IMR-90 (cell line): ENCODE measurements at regions of chr1 and their contacts with region 1.

Region 1: GRCh38 chr1:15799004-15799936 is 8.2 kb downstream of the UQCRHL start:
- DNase-seq: peak; percentile 96
- ATAC-seq: peak; percentile 86
- H3K4me3 ChIP-seq: no peak overlapping the region
- H3K27ac ChIP-seq: peak overlapping the region; percentile 81
- H3K4me1 ChIP-seq: peaks cover 43% of the 10 kb centered on the region
- H3K27me3 ChIP-seq: no peaks in the 10 kb centered on the region
- CTCF ChIP-seq: no peak
- POLR2A ChIP-seq: no peak
- RAD21 ChIP-seq: no peak

Region 2: DNA sequence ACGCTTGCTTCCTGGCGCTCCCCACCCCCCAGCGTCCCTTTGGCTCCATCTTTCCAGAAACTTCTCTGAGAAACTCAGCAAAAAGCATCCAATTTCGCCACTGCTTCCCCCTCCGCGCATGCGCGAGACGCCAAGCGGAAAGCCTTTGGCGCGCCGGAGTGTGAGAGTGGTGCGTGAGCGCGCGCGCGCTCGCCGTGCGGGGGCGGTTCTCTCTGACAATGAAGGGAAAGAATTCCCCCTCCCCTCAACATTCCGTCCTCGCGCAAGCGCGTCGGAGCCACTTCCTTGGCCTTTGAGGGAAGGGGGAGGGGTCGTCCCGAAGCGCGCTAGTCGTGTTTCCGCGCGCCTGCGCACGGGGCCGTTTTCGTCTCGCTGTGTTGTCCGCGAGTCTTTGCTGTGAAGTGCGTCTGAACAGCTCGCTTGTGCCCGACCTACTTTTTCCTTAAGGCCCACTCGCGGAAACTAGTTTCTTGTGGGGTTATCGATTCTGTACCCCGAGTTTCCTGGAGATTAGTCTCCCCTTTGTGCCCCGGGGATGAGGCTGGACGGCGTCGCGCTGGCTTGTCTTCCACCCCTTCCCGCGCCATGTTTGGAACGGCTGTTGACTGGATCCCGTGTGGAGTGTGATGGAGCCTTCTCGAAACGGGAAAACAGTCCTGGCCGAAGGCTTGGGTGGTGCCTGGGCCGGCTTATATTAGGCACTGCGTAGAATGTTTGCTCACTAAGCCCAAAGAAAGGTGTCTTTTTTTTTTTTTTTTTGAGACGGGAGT is 36.7 kb after region 1 on chr1:
- CTCF ChIA-PET with region 1: no interaction called
- POLR2A ChIA-PET with region 1: no interaction called
- dilution Hi-C with region 1: no loop called
- in situ Hi-C with region 1: no loop called
- intact Hi-C with region 1: loop called (anchors 2 kb)
- DNase-seq: peak; percentile 99
- ATAC-seq: peak; percentile 82
- H3K4me3 ChIP-seq: peak overlapping the region; percentile 68
- H3K27ac ChIP-seq: peak overlapping the region; percentile 85
- H3K4me1 ChIP-seq: peaks cover 2% of the 10 kb centered on the region; the same call in 1 of the 2 replicates
- H3K27me3 ChIP-seq: no peaks in the 10 kb centered on the region
- CTCF ChIP-seq: no peak
- POLR2A ChIP-seq: peak; percentile 85
- RAD21 ChIP-seq: no peak

Region 3: GRCh38 chr1:15866721-15867201 is 67.5 kb after region 1 on chr1:
- CTCF ChIA-PET with region 1: no interaction called
- POLR2A ChIA-PET with region 1: no interaction called
- dilution Hi-C with region 1: no loop called
- in situ Hi-C with region 1: no loop called
- intact Hi-C with region 1: no loop called
- DNase-seq: no peak
- ATAC-seq: no peak
- H3K4me3 ChIP-seq: no peak overlapping the region
- H3K27ac ChIP-seq: no peak overlapping the region
- H3K4me1 ChIP-seq: peaks cover 7% of the 10 kb centered on the region
- H3K27me3 ChIP-seq: no peaks in the 10 kb centered on the region
- CTCF ChIP-seq: no peak
- POLR2A ChIP-seq: no peak
- RAD21 ChIP-seq: no peak

Region 4: DNA sequence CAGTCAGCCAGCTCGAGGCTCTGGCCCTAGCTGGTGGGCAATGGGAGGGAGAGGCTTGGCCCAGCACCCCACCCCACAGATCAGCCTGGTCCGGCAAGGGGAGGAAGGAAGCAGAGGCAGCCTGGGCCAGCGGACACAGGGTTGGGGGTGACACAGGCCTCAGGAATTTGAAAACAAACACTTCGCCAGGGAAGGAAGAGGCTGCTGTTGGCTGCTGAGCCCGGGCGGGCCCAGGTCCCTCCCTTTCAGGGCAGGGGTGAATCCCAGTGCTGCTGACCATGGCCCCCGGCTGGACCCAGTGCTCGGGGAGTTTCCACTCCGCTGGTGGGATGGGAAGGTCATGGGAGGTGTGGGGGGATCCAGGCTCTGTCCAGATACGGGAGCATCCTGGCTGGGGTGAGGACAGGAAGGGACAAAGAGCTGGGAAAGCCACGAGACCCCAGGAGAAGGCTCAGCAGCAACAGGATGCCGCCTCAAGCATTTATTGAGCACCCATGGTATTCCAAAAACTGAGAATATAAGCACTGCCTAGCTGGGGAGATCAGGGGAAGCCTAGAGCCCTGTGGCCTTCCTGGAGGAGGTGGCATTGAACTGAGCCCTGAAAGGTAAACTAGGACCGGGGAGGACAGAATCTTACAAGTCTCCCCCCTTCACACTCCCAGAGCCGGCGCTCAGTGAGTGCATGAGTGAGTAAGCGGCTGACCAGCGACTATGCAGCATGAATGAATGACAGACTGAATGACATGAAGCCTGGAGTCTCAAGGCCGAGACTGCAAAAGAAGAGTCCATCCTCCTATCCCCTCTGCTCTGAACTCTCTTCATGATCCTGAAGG is 382.8 kb after region 1 on chr1:
- CTCF ChIA-PET with region 1: interaction called, 4 read pairs
- POLR2A ChIA-PET with region 1: no interaction called
- dilution Hi-C with region 1: no loop called
- in situ Hi-C with region 1: loop called (anchors 25 kb)
- intact Hi-C with region 1: loop called (anchors 5 kb)
- DNase-seq: peak; percentile 89
- ATAC-seq: peak; percentile 97
- H3K4me3 ChIP-seq: no peak overlapping the region
- H3K27ac ChIP-seq: peak overlapping the region; percentile 99
- H3K4me1 ChIP-seq: peaks cover 22% of the 10 kb centered on the region
- H3K27me3 ChIP-seq: no peaks in the 10 kb centered on the region
- CTCF ChIP-seq: no peak
- POLR2A ChIP-seq: no peak
- RAD21 ChIP-seq: 0 out of 2 replicates have a peak, but pooled peaks have one; percentile 12